OCI-LY7 (cell line): ENCODE measurements at regions of chrX and their contacts with region 1.

Region 1: GRCh38 chrX:106481341-106481740 is 130.4 kb upstream of the RADX start:
- DNase-seq: peak; percentile 46
- H3K4me3 ChIP-seq: no peak overlapping the region
- H3K27ac ChIP-seq: no peak overlapping the region
- H3K4me1 ChIP-seq: no peaks in the 10 kb centered on the region
- CTCF ChIP-seq: peak; percentile 77

Region 2: DNA sequence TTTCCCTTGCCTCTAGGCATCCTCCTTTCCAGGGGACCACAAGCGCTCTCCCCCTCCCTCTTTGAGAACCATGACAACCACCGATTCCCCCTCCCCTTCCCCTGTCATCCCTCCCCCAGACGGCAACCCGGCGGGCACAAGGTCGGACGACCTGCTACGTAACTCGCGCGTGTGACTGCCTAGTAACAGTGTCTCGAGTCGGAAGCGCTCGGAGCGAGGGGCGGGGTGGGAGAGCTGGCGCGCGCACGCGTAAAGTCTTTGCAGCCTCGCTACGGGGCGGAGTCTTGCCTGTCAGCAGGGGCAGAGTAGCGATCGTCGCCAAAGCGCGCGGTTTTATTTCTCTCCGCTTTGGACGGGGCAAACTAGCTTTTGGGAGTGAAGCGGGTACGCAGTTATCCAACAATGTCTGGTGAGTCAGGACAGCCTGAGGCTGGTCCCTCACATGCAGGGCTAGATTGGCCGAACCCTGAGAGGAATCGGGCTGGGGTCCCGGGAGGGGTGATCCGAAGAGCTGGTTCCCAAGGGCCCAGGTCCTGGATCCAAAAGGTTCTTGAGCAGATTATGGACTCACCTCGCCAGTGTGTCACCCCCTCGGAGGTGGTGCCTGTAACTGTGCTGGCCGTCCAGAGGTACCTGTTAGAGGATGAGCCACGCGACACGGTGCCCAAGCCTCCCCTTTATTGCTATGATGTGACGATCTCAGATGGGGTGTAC is 130.5 kb after region 1 on chrX and contains the start of gene RADX:
- CTCF ChIA-PET with region 1: no interaction called
- POLR2A ChIA-PET with region 1: no interaction called
- intact Hi-C with region 1: loop called (anchors 10 kb)
- DNase-seq: peak; percentile 91
- H3K4me3 ChIP-seq: peak within 1 kb of the TSS; percentile 89
- H3K27ac ChIP-seq: peak within 1 kb of the TSS; percentile 79
- H3K4me1 ChIP-seq: peaks cover 18% of the 10 kb centered on the region
- CTCF ChIP-seq: no peak
- total RNA-seq, gene RADX: 30.8 and 34.8 TPM in 2 replicates

Region 3: GRCh38 chrX:106791495-106791894 is 310.2 kb after region 1 on chrX:
- CTCF ChIA-PET with region 1: no interaction called
- POLR2A ChIA-PET with region 1: interaction called, 3 read pairs
- intact Hi-C with region 1: loop called (anchors 10 kb)
- DNase-seq: peak; percentile 9
- H3K4me3 ChIP-seq: no peak overlapping the region
- H3K27ac ChIP-seq: no peak overlapping the region
- H3K4me1 ChIP-seq: no peaks in the 10 kb centered on the region
- CTCF ChIP-seq: peak; percentile 72